Common myeloid progenitor, CD34-positive (primary cell): ENCODE measurements at regions of chr19 and their contacts with region 1.

Region 1: DNA sequence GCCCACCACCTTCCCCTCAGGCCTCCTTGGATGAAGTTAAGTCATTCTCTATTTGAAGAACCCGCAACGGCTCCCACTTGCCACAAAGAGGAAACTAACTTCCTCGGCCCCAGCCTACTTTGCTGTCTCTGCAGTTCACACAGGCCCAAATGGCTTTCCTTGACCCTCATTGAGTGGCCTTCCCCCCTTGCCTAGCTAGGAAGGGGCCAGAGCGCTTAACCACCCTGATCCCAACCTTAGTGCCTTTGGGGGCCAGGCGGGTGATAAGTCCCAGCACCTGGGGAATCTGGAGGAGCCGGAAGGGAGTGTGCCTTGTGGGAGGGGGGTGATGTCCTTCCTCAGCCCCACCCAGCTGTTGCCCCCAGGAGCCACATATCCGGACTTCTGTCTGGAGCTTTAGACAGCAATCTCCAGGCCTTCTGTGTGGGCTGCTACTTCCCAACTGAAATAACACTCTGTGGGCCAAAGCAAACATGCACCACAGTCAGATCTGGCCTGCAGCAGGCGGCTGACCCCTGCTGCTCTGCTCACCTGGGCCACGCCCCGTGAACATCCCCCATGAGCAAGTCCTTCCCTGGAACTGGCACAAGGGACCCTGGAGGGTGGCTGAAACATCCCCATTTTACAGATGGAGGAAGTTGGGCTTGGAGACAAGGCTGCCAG is 10.5 kb downstream of the NECTIN2 start:
- DNase-seq: peak in 2 of 3 donors; percentile 78 to 86
- H3K4me3 ChIP-seq: peak overlapping the region in 4 of 7 experiments; percentile 11 to 59 (median 27)
- H3K27ac ChIP-seq: peak overlapping the region; percentile 15 to 71
- H3K4me1 ChIP-seq: peaks cover 0 to 60% (median 44%) of the 10 kb centered on the region in 4 experiments
- H3K27me3 ChIP-seq: no peaks in the 10 kb centered on the region

Region 2: GRCh38 chr19:44845612-44846454 is 10.7 kb before region 1 on chr19 and contains the start of gene NECTIN2:
- CTCF ChIA-PET with region 1: interaction called, 10 read pairs
- POLR2A ChIA-PET with region 1: interaction called, 4 read pairs
- DNase-seq: peak; percentile 94 to 98 (median 98)
- H3K4me3 ChIP-seq: peak within 1 kb of the TSS; percentile 66 to 92 (median 82)
- H3K27ac ChIP-seq: peak within 1 kb of the TSS; percentile 42 to 90
- H3K4me1 ChIP-seq: peaks cover 8 to 62% (median 60%) of the 10 kb centered on the region in 4 experiments
- H3K27me3 ChIP-seq: no peaks in the 10 kb centered on the region

Region 3: GRCh38 chr19:44869733-44870470 is 13.3 kb after region 1 on chr19:
- CTCF ChIA-PET with region 1: interaction called, 16 read pairs
- POLR2A ChIA-PET with region 1: interaction called, 6 read pairs
- DNase-seq: peak in 2 of 3 donors; percentile 74 to 75
- H3K4me3 ChIP-seq: peak overlapping the region in 1 of 7 experiments; percentile 6
- H3K27ac ChIP-seq: no peak overlapping the region
- H3K4me1 ChIP-seq: peaks cover 0 to 23% (median 12%) of the 10 kb centered on the region in 4 experiments
- H3K27me3 ChIP-seq: no peaks in the 10 kb centered on the region